ENCODE measurements at regions of chr15 and their contacts with region 1.

Region 1: GRCh38 chr15:48352474-48353072 is 21.3 kb downstream of the DUT start:
- DNase-seq: no peak
- H3K4me3 ChIP-seq: no peak overlapping the region
- H3K27ac ChIP-seq: no peak overlapping the region
- H3K4me1 ChIP-seq: no peaks in the 10 kb centered on the region
- H3K27me3 ChIP-seq: no peaks in the 10 kb centered on the region
- CTCF ChIP-seq: peak; percentile 86

Region 2: GRCh38 chr15:48472753-48473152 is 120.2 kb after region 1 on chr15:
- intact Hi-C with region 1: loop called (anchors 10 kb)
- DNase-seq: no peak
- H3K4me3 ChIP-seq: no peak overlapping the region
- H3K27ac ChIP-seq: no peak overlapping the region
- H3K4me1 ChIP-seq: peaks cover 6% of the 10 kb centered on the region
- H3K27me3 ChIP-seq: no peaks in the 10 kb centered on the region
- CTCF ChIP-seq: no peak

Region 3: GRCh38 chr15:48522911-48523310 is 170.3 kb after region 1 on chr15:
- intact Hi-C with region 1: no loop called
- DNase-seq: no peak
- H3K4me3 ChIP-seq: no peak overlapping the region
- H3K27ac ChIP-seq: no peak overlapping the region
- H3K4me1 ChIP-seq: no peaks in the 10 kb centered on the region
- H3K27me3 ChIP-seq: no peaks in the 10 kb centered on the region
- CTCF ChIP-seq: no peak

Region 4: DNA sequence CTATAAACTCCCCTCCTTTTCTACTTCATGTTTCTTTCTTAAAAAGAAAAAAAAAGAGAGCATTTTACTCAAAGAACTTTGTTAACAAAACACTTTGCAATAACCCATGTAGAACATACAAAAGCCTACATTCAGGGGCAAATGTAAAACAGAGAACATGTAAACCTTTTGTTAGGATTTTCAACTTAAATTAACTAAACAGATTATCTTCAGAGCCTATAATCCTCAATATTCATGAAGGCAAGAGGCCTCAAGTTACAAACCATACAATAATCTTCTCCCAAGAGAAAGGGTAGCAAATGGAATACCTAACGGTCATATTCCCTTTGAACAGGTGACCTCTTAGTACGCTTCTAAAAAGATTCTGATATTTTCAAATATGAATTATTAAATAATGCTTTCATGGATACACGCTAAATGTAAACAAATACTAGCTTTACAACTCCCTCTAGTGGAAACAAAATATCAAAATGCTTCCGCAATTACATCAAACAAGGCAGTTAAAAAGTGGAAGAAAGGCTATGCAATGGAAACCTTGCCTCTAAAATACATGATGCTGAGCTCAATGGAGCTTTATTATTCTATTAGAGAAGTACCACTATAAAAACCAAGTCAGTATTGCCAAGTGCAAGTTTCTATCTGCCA is 448.4 kb after region 1 on chr15:
- intact Hi-C with region 1: loop called (anchors 10 kb)
- DNase-seq: no peak
- H3K4me3 ChIP-seq: no peak overlapping the region
- H3K27ac ChIP-seq: peak overlapping the region; percentile 15
- H3K4me1 ChIP-seq: peaks cover 4% of the 10 kb centered on the region
- H3K27me3 ChIP-seq: no peaks in the 10 kb centered on the region
- CTCF ChIP-seq: peak; percentile 65